ENCODE measurements at regions of chr4 and their contacts with region 1.

Region 1: GRCh38 chr4:136369073-136369472 is 1163.2 kb downstream of the PCDH18 start:
- DNase-seq: peak; percentile 94
- H3K4me3 ChIP-seq: peak overlapping the region in 1 of 3 experiments; percentile 25
- H3K27ac ChIP-seq: peak overlapping the region; percentile 79
- H3K4me1 ChIP-seq: peaks cover 44% of the 10 kb centered on the region
- H3K27me3 ChIP-seq: no peaks in the 10 kb centered on the region
- CTCF ChIP-seq: no peak
- POLR2A ChIP-seq: no peak

Region 2: GRCh38 chr4:136002316-136002715 is 366.8 kb before region 1 on chr4:
- CTCF ChIA-PET with region 1: no interaction called
- POLR2A ChIA-PET with region 1: no interaction called
- dilution Hi-C with region 1: no loop called
- intact Hi-C with region 1: no loop called
- DNase-seq: no peak
- H3K4me3 ChIP-seq: no peak overlapping the region
- H3K27ac ChIP-seq: no peak overlapping the region
- H3K4me1 ChIP-seq: no peaks in the 10 kb centered on the region
- H3K27me3 ChIP-seq: no peaks in the 10 kb centered on the region
- CTCF ChIP-seq: no peak
- POLR2A ChIP-seq: no peak

Region 3: GRCh38 chr4:136056748-136057147 is 312.3 kb before region 1 on chr4:
- CTCF ChIA-PET with region 1: no interaction called
- POLR2A ChIA-PET with region 1: no interaction called
- dilution Hi-C with region 1: no loop called
- intact Hi-C with region 1: no loop called
- DNase-seq: no peak
- H3K4me3 ChIP-seq: no peak overlapping the region
- H3K27ac ChIP-seq: no peak overlapping the region
- H3K4me1 ChIP-seq: no peaks in the 10 kb centered on the region
- H3K27me3 ChIP-seq: no peaks in the 10 kb centered on the region
- CTCF ChIP-seq: no peak
- POLR2A ChIP-seq: no peak

Region 4: DNA sequence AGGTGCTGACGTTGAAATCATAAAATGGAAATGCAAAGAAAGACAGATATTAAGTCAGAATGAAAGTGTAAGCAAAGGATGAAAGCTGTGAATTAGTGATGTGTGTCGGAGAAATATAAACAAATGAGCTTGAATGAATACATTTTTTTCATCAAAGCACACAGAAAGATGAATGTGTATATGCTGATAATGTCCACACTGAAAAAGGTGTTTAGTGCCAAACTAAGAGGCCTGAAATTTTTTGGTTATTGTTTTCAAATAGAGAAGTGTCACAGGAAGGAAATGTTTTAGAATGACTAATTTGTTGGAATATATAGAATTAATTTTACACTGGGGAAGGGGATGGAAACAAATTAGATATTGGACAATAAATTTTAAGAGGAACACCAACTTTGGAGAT is 54.4 kb before region 1 on chr4:
- CTCF ChIA-PET with region 1: interaction called, 5 read pairs
- POLR2A ChIA-PET with region 1: no interaction called
- dilution Hi-C with region 1: no loop called
- intact Hi-C with region 1: loop called (anchors 2 kb)
- DNase-seq: peak; percentile 73
- H3K4me3 ChIP-seq: peak overlapping the region in 1 of 3 experiments; percentile 23
- H3K27ac ChIP-seq: peak overlapping the region; percentile 5
- H3K4me1 ChIP-seq: peaks cover 19% of the 10 kb centered on the region
- H3K27me3 ChIP-seq: no peaks in the 10 kb centered on the region
- CTCF ChIP-seq: no peak
- POLR2A ChIP-seq: no peak

Region 5: GRCh38 chr4:136412708-136413107 is 43.6 kb after region 1 on chr4:
- CTCF ChIA-PET with region 1: no interaction called
- POLR2A ChIA-PET with region 1: no interaction called
- dilution Hi-C with region 1: no loop called
- intact Hi-C with region 1: loop called (anchors 1 kb)
- DNase-seq: peak; percentile 87
- H3K4me3 ChIP-seq: no peak overlapping the region
- H3K27ac ChIP-seq: peak overlapping the region; percentile 69
- H3K4me1 ChIP-seq: peaks cover 22% of the 10 kb centered on the region
- H3K27me3 ChIP-seq: no peaks in the 10 kb centered on the region
- CTCF ChIP-seq: no peak
- POLR2A ChIP-seq: no peak

Region 6: GRCh38 chr4:136485006-136485405 is 115.9 kb after region 1 on chr4:
- CTCF ChIA-PET with region 1: no interaction called
- POLR2A ChIA-PET with region 1: no interaction called
- dilution Hi-C with region 1: no loop called
- intact Hi-C with region 1: loop called (anchors 5 kb)
- DNase-seq: peak; percentile 53
- H3K4me3 ChIP-seq: no peak overlapping the region
- H3K27ac ChIP-seq: no peak overlapping the region
- H3K4me1 ChIP-seq: peaks cover 4% of the 10 kb centered on the region
- H3K27me3 ChIP-seq: no peaks in the 10 kb centered on the region
- CTCF ChIP-seq: no peak
- POLR2A ChIP-seq: no peak

Region 7: GRCh38 chr4:136650541-136651277 is 281.6 kb after region 1 on chr4:
- CTCF ChIA-PET with region 1: no interaction called
- POLR2A ChIA-PET with region 1: no interaction called
- dilution Hi-C with region 1: no loop called
- intact Hi-C with region 1: loop called (anchors 10 kb)
- DNase-seq: peak; percentile 63
- H3K4me3 ChIP-seq: no peak overlapping the region
- H3K27ac ChIP-seq: peak overlapping the region; percentile 54
- H3K4me1 ChIP-seq: peaks cover 16% of the 10 kb centered on the region
- H3K27me3 ChIP-seq: no peaks in the 10 kb centered on the region
- CTCF ChIP-seq: no peak
- POLR2A ChIP-seq: no peak

Region 8: GRCh38 chr4:136818811-136819330 is 449.8 kb after region 1 on chr4:
- CTCF ChIA-PET with region 1: no interaction called
- POLR2A ChIA-PET with region 1: no interaction called
- dilution Hi-C with region 1: no loop called
- intact Hi-C with region 1: loop called (anchors 1 kb)
- DNase-seq: peak; percentile 88
- H3K4me3 ChIP-seq: no peak overlapping the region
- H3K27ac ChIP-seq: peak overlapping the region; percentile 13
- H3K4me1 ChIP-seq: peaks cover 9% of the 10 kb centered on the region
- H3K27me3 ChIP-seq: no peaks in the 10 kb centered on the region
- CTCF ChIP-seq: no peak
- POLR2A ChIP-seq: no peak